ENCODE measurements at regions of chr7 and their contacts with region 1.

Region 1: DNA sequence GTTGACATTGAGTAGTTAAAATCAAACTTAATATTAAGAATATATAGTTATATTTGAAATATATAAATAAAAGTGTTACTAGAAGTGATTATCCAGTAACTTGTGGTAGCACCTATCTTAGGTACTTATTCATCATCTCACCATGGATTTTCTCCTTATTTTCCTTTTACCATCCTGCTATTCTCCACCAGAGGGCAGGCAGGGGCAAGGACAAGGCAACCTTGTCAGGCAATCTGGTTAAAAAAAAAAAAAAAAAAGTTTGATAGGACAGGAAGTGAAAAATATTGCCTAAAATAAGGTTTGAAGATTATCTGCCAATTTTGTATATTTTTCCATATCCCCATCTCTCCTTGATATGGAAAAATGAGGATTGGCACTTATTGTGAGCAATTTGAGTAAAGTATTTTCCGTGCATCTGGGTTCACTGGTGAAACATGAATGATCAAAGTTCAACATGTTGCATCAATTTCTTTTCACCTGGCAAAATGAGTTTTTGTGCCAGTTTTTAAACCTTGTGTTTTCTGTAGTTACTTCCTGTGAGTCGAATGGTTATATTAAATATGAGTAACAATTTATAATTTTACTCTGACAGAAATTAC is 256.7 kb downstream of the AGMO start:
- DNase-seq: no peak
- H3K4me3 ChIP-seq: no peak overlapping the region
- H3K27ac ChIP-seq: no peak overlapping the region
- H3K4me1 ChIP-seq: peaks cover 0 to 12% (median 7%) of the 10 kb centered on the region in 4 donors
- H3K27me3 ChIP-seq: no peaks in the 10 kb centered on the region
- CTCF ChIP-seq: peak; percentile 52 to 79 (median 59)
- EP300 ChIP-seq: no peak
- POLR2A ChIP-seq: no peak

Region 2: DNA sequence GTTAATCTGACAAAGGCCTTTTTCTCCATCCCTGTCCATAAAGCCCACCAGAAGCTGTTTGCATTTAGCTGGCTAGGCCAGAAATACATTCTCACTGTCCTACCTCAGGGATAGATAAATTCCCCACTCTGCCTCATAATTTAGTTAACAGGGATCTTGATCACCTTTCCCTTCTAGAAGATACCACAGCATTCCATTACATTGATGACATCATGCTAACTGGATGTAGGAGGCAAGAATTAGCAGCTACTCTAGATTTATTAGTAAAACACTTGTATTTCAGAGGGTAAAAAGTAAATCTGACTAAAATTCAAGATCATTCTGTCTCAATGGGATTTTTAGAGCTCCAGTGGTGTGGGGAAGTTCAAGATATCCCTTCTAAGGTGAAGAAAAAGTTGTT is 505.9 kb before region 1 on chr7:
- intact Hi-C with region 1: no loop called
- DNase-seq: no peak
- H3K4me3 ChIP-seq: no peak overlapping the region
- H3K27ac ChIP-seq: no peak overlapping the region
- H3K4me1 ChIP-seq: no peaks in the 10 kb centered on the region
- H3K27me3 ChIP-seq: no peaks in the 10 kb centered on the region
- CTCF ChIP-seq: no peak
- EP300 ChIP-seq: no peak
- POLR2A ChIP-seq: no peak

Region 3: DNA sequence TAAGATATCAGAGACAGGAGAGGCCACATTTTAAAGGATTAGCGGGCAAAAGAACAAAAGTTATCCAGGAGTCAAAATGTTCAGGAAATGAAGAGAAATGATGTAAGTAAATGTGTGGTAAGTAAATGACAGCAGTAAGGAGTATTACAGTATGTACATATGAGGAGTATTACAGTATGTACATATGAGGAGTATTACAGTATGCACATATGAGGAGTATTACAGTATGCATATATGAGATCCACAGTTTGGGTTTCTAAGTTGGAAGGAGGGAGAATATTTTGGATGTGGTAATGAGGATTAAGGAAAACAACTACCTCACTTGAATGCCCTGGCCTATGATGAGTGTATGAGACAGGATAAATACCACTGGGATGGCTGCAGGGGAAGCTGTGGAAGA is 210.1 kb before region 1 on chr7:
- intact Hi-C with region 1: no loop called
- DNase-seq: no peak
- H3K4me3 ChIP-seq: no peak overlapping the region
- H3K27ac ChIP-seq: no peak overlapping the region
- H3K4me1 ChIP-seq: no peaks in the 10 kb centered on the region
- H3K27me3 ChIP-seq: no peaks in the 10 kb centered on the region
- CTCF ChIP-seq: no peak
- EP300 ChIP-seq: no peak
- POLR2A ChIP-seq: no peak

Region 4: DNA sequence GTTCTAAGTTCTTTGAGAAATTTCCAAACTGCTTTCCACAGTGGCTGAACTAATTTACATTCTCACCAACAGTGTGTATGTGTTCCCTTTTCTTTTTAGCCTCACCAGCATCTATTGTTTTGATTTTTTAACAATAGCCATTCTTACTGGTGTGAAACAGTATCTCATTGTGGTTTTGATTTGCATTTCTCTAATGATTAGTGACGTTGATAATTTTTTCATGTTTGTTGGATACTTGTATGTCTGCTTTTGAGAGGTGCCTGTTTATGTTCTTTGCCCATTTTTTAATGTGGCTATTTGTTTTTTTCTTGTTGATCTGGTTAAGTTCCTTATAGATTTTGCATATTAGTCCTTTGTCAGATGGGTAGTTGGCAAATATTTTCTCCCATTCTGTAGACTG is 65.3 kb after region 1 on chr7:
- intact Hi-C with region 1: no loop called
- DNase-seq: no peak
- H3K4me3 ChIP-seq: no peak overlapping the region
- H3K27ac ChIP-seq: no peak overlapping the region
- H3K4me1 ChIP-seq: no peaks in the 10 kb centered on the region
- H3K27me3 ChIP-seq: no peaks in the 10 kb centered on the region
- CTCF ChIP-seq: no peak
- EP300 ChIP-seq: no peak
- POLR2A ChIP-seq: no peak

Region 5: DNA sequence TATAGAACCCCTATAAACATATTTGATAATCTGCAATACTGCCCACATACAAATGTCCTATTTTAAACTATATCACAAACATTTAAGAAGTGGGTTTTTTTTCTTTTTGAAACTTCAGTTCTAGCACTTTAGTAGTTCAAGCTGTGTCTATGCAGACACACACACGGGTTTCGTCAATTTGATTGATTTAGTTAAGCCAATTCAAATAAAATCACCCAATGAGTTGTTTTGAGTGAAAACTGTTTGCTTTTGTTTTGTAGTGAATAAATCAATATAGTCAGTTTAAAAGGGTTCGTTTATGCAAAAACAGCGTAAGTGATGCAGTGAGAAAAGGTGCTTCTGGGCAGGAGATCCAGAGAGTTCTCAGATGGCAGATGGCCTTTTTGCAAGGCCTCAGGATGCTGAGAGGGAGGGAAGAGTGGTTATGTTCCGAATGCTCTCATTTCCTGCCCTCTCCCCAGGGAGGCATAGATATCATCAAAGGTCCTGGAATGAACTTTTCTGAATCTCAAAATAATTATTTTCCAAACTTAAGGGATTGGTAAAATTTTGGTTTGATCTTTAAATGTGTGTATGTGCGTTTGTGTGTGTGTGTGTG is 154.0 kb after region 1 on chr7:
- intact Hi-C with region 1: no loop called
- DNase-seq: no peak
- H3K4me3 ChIP-seq: no peak overlapping the region
- H3K27ac ChIP-seq: no peak overlapping the region
- H3K4me1 ChIP-seq: peaks cover 12 to 29% (median 15%) of the 10 kb centered on the region in 4 donors
- H3K27me3 ChIP-seq: no peaks in the 10 kb centered on the region
- CTCF ChIP-seq: no peak
- EP300 ChIP-seq: no peak
- POLR2A ChIP-seq: no peak

Region 6: DNA sequence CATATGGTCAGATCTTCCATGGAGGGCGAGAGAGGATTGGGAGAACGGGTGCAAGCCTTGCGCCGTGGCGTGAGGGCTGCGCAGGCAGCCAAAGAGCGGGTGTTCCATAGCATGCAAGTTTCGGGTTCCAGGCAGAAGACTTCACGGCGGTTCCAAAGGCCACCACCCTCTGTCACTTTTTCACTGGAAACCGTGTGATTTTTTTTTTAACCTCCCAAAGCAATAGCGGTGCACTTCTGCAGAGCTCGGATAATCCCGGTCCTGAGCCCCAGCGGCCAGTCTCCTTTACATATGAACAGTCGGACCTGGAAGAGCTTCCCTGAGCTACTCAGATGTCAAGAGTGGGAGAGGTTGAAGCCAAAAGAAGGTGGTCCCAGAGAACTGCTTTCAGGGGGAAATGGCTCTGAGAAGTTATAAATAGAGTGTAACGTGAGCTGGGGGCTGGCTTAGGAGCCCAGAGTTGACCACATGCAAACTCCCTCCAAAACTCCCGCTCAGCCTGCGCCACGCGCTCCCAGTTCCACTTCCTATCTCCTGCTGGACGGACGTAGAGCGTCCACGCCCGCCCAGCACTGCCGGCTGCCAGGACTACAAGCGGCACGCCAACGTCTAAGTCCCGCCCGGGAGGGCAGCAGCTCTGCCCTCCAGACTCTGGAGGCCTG is 381.3 kb after region 1 on chr7 and contains the start of gene MEOX2:
- intact Hi-C with region 1: loop called (anchors 10 kb)
- DNase-seq: peak; percentile 92
- H3K4me3 ChIP-seq: peak within 1 kb of the TSS; percentile 61 to 73 (median 68)
- H3K27ac ChIP-seq: peak within 1 kb of the TSS; percentile 79 to 89 (median 86)
- H3K4me1 ChIP-seq: peaks cover 7 to 37% (median 21%) of the 10 kb centered on the region in 4 donors
- H3K27me3 ChIP-seq: peaks cover 0 to 43% (median 13%) of the 10 kb centered on the region in 4 donors
- CTCF ChIP-seq: no peak
- EP300 ChIP-seq: no peak
- POLR2A ChIP-seq: peak; percentile 18
- total RNA-seq, gene MEOX2: 3.6 to 32.3 (median 13.0) TPM

Region 7: GRCh38 chr7:15720849-15721471 is 415.9 kb after region 1 on chr7:
- intact Hi-C with region 1: loop called (anchors 10 kb)
- DNase-seq: no peak
- H3K4me3 ChIP-seq: no peak overlapping the region
- H3K27ac ChIP-seq: no peak overlapping the region
- H3K4me1 ChIP-seq: peaks cover 0 to 4% (median 0%) of the 10 kb centered on the region in 4 donors
- H3K27me3 ChIP-seq: no peaks in the 10 kb centered on the region
- CTCF ChIP-seq: peak; percentile 66 to 78 (median 71)
- EP300 ChIP-seq: no peak
- POLR2A ChIP-seq: no peak

Region 8: DNA sequence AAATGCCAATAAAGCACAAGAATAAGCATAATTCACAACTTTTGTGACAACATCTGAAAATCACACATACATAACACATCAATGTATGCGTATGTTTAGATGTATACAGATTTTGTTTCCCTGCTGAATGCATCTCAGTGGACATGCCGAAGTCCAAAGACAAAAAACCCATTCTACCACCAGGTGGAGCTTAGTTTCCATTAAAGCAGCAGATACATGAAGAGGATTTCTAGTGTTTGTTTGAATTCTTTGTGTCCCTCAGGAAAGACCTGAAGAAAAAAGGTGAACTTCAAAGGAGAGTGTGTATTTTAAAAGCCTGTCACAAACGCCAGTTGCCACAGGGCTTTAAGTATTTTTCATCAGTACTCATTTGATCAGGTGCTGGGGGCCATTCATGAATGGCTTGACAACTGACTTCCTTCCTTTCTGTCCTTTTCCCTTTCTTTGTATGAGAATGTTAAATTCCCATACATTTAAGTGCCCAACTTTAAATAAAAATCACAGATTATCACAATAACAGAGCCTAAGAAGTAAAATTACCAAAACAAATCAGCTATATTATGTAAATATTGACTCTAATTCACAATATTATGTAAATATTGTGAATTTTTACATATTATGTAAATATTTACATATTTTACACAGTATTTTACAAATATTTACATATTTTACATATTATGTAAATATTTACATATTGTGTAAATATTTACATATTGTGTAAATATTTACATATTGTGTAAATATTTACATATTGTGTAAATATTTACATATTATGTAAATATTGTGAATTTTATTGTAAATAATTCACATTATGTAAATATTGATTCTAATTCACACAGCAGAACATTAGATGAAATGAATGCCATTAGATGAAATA is 773.2 kb after region 1 on chr7:
- intact Hi-C with region 1: loop called (anchors 5 kb)
- DNase-seq: no peak
- H3K4me3 ChIP-seq: no peak overlapping the region
- H3K27ac ChIP-seq: no peak overlapping the region
- H3K4me1 ChIP-seq: peaks cover 0 to 5% (median 0%) of the 10 kb centered on the region in 4 donors
- H3K27me3 ChIP-seq: no peaks in the 10 kb centered on the region
- CTCF ChIP-seq: peak; percentile 60 to 71 (median 65)
- EP300 ChIP-seq: no peak
- POLR2A ChIP-seq: no peak

Measured in esophagus muscularis mucosa (tissue), 4 donors.